Calu3 (cell line): ENCODE measurements at regions of chr11 and their contacts with region 1.

Region 1: GRCh38 chr11:3091791-3092602 is 34.8 kb upstream of the CARS1 start:
- DNase-seq: peak; percentile 87
- H3K4me3 Mint-ChIP-seq: no peak overlapping the region
- H3K27ac Mint-ChIP-seq: no peak overlapping the region
- H3K4me1 Mint-ChIP-seq: peaks cover 30% of the 10 kb centered on the region
- H3K27me3 Mint-ChIP-seq: peaks cover 15% of the 10 kb centered on the region
- CTCF ChIP-seq: peak; percentile 97

Region 2: DNA sequence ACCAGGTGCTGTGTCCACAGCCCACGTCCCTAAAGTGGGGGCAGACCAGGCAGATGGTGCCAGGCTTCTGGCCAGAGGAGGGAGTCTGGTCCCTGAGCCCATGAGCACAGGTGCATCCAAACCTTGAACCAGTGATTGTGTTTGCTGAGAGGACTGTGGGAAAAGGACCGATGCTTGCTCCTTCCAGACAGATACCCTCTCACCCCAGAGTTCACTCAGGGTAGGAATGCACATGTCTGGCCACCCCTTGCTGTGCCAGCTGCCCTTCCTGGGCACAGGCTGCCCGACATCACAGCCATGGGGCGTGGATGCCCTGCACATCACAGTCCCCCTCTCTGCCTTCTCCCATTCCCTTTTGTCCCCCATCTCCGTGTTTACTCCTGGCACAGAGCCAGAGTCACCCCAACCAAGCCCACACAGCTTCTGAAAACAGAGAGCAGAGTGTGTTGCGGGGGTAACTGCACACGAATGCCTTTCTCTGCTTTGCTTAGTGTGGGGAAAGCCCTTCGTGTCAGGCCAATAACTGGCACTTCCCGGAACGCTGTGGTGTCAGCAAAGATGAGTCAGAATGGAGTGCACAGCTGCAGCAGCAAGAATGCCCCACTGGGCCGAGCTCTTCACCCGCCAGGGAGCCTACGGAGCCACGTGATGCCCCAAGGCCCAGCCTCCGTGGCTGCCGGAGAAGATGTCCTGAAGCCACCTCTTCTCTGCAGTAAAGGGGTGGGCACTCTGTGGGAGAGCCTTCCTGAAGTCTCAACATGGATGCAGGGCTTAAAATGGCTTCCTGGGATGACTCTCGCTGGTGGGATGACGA is 42.4 kb before region 1 on chr11:
- CTCF ChIA-PET with region 1: interaction called, 15 read pairs
- intact Hi-C with region 1: no loop called
- DNase-seq: peak; percentile 75
- H3K4me3 Mint-ChIP-seq: peak overlapping the region; percentile 33
- H3K27ac Mint-ChIP-seq: peak overlapping the region; percentile 33
- H3K4me1 Mint-ChIP-seq: peaks cover 23% of the 10 kb centered on the region
- H3K27me3 Mint-ChIP-seq: no peaks in the 10 kb centered on the region
- CTCF ChIP-seq: no peak

Region 3: DNA sequence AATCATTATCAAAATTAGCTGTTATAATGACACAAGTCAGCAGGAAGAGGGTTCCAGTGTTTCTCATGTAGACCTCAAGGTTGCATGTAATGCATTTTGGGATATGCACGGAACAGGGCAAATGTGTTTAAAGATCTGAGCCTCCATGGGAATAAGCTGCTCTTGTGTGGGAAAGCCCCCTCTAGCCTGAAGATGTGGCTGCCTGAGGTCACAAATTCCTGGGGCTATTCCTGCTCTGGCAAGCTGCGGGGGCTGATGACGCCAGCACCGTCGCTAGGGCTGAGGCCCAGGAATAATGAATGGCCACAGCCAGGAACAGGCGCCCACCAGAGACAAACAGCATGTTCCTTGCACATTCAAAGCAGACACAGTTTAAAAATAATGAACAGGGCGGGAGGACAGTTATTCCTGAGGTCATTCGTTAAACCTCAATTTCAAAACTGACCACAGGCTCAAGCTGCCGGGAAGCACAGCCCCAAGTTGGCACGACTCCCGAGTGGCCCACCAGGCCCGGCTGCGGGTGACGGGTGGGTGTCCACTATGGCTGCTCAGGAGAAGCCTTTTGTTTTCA is 61.4 kb after region 1 on chr11:
- CTCF ChIA-PET with region 1: no interaction called
- intact Hi-C with region 1: no loop called
- DNase-seq: no peak
- H3K4me3 Mint-ChIP-seq: no peak overlapping the region
- H3K27ac Mint-ChIP-seq: no peak overlapping the region
- H3K4me1 Mint-ChIP-seq: peaks cover 8% of the 10 kb centered on the region
- H3K27me3 Mint-ChIP-seq: peaks cover 15% of the 10 kb centered on the region
- CTCF ChIP-seq: no peak